Mammary epithelial cell (primary cell): ENCODE measurements at regions of chr17 and their contacts with region 1.

Region 1: GRCh38 chr17:7687908-7688807 is at the start of gene WRAP53:
- DNase-seq: peak; percentile 99
- H3K4me3 ChIP-seq: peak within 1 kb of the TSS; percentile 79 to 100 (median 96)
- H3K27ac ChIP-seq: peak within 1 kb of the TSS; percentile 98
- H3K4me1 ChIP-seq: peaks cover 24% of the 10 kb centered on the region
- H3K27me3 ChIP-seq: no peaks in the 10 kb centered on the region
- CTCF ChIP-seq: peak; percentile 95 to 97
- total RNA-seq, gene WRAP53: 4.3 to 15.9 TPM

Region 2: GRCh38 chr17:7351665-7352501 is 336.3 kb before region 1 on chr17 and contains the start of gene KCTD11:
- CTCF ChIA-PET with region 1: no interaction called
- dilution Hi-C with region 1: no loop called
- in situ Hi-C with region 1: no loop called
- intact Hi-C with region 1: loop called (anchors 2 kb)
- DNase-seq: peak; percentile 99
- H3K4me3 ChIP-seq: peak within 1 kb of the TSS; percentile 60 to 88 (median 77)
- H3K27ac ChIP-seq: peak within 1 kb of the TSS; percentile 99
- H3K4me1 ChIP-seq: peaks cover 46% of the 10 kb centered on the region
- H3K27me3 ChIP-seq: no peaks in the 10 kb centered on the region
- CTCF ChIP-seq: peak in 1 of 2 donors; percentile 30
- total RNA-seq, gene KCTD11: 13.2 to 43.9 TPM

Region 3: GRCh38 chr17:7484067-7484918 is 203.9 kb before region 1 on chr17 and contains the start of gene POLR2A:
- CTCF ChIA-PET with region 1: no interaction called
- dilution Hi-C with region 1: no loop called
- in situ Hi-C with region 1: no loop called
- intact Hi-C with region 1: loop called (anchors 1 kb)
- DNase-seq: peak; percentile 97
- H3K4me3 ChIP-seq: peak within 1 kb of the TSS; percentile 72 to 78 (median 77)
- H3K27ac ChIP-seq: peak within 1 kb of the TSS; percentile 96
- H3K4me1 ChIP-seq: peaks cover 21% of the 10 kb centered on the region
- H3K27me3 ChIP-seq: no peaks in the 10 kb centered on the region
- CTCF ChIP-seq: no peak
- total RNA-seq, gene POLR2A: 168 to 184 TPM

Region 4: GRCh38 chr17:7583253-7584109 is 104.7 kb before region 1 on chr17 and contains the start of gene MPDU1:
- CTCF ChIA-PET with region 1: interaction called, 7 read pairs
- dilution Hi-C with region 1: loop called (anchors 5 kb)
- in situ Hi-C with region 1: no loop called
- intact Hi-C with region 1: no loop called
- DNase-seq: peak; percentile 95
- H3K4me3 ChIP-seq: peak within 1 kb of the TSS; percentile 42 to 63 (median 50)
- H3K27ac ChIP-seq: peak within 1 kb of the TSS; percentile 86
- H3K4me1 ChIP-seq: peaks cover 66% of the 10 kb centered on the region
- H3K27me3 ChIP-seq: no peaks in the 10 kb centered on the region
- CTCF ChIP-seq: no peak
- total RNA-seq, gene MPDU1: 44.8 to 51.2 TPM

Region 5: GRCh38 chr17:7627250-7628121 is 60.7 kb before region 1 on chr17 and contains the start of gene SAT2:
- CTCF ChIA-PET with region 1: interaction called, 11 read pairs
- dilution Hi-C with region 1: no loop called
- in situ Hi-C with region 1: loop called in 1 of 2 experiments (anchors 5 kb)
- intact Hi-C with region 1: loop called (anchors 1 kb)
- DNase-seq: peak; percentile 87
- H3K4me3 ChIP-seq: peak within 1 kb of the TSS; percentile 63 to 76 (median 66)
- H3K27ac ChIP-seq: no peak within 1 kb of the TSS
- H3K4me1 ChIP-seq: peaks cover 2% of the 10 kb centered on the region
- H3K27me3 ChIP-seq: no peaks in the 10 kb centered on the region
- CTCF ChIP-seq: no peak
- total RNA-seq, gene SAT2: 18.2 to 49.8 TPM

Region 6: DNA sequence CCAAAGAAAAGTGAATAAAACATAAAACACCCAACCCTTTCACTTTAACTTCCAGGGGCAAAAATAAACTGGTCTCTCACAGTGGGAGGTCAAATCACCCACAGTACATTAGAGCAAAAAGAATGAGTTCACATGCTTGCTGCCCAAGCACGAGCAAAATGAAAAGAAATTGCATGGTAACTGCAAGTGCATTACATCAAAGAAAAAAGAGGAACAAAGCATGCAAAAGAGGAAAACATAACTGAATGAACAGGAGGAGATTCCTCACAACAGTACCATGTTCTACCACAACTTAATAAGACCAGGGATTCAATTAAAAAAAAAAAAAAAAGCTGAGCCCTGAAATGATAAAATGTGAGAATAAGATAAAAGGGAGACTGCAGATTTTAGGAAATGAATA is 41.7 kb after region 1 on chr17:
- CTCF ChIA-PET with region 1: interaction called, 14 read pairs
- dilution Hi-C with region 1: no loop called
- in situ Hi-C with region 1: no loop called
- intact Hi-C with region 1: no loop called
- DNase-seq: no peak
- H3K4me3 ChIP-seq: no peak overlapping the region
- H3K27ac ChIP-seq: no peak overlapping the region
- H3K4me1 ChIP-seq: no peaks in the 10 kb centered on the region
- H3K27me3 ChIP-seq: no peaks in the 10 kb centered on the region
- CTCF ChIP-seq: no peak

Region 7: DNA sequence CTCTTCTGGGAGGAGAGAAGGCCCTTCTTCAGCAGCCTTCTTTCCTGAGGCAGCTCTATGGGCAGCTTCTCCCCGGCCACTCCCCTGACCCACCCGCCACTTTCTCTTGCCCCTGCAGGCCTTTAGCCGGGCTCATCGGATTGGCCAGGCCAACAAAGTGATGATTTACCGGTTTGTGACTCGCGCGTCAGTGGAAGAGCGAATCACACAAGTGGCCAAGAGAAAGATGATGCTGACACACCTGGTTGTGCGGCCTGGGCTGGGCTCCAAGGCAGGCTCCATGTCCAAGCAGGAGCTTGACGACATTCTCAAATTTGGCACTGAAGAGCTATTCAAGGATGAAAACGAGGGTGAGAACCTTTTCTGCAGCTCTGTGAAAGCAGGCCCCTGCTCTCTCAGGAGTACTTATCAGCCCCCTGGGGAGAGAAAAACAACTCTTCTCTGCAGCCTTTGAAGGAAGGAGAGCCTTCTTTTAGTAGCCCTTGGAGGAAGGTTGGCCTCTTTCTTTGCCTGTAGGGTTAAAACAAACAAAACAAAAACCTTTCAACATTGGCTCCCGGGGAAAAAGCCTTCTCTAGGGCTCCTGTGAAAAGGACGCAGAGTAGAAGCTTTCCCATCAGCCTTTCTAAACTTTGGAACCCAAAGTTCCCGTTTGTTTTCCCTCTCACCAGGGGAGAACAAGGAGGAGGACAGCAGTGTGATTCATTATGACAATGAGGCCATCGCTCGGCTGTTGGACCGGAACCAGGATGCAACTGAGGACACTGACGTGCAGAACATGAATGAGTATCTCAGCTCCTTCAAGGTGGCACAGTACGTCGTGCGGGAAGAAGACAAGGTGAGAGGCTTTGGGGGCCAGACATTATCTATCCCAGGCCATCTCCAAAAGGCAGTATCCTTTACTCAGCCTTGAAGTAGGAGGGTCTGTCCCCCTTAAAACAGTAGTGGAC is 215.3 kb after region 1 on chr17:
- CTCF ChIA-PET with region 1: no interaction called
- dilution Hi-C with region 1: no loop called
- in situ Hi-C with region 1: no loop called
- intact Hi-C with region 1: no loop called
- DNase-seq: peak; percentile 71
- H3K4me3 ChIP-seq: no peak overlapping the region
- H3K27ac ChIP-seq: no peak overlapping the region
- H3K4me1 ChIP-seq: no peaks in the 10 kb centered on the region
- H3K27me3 ChIP-seq: no peaks in the 10 kb centered on the region
- CTCF ChIP-seq: no peak